Heart left ventricle (tissue), 16 donors: ENCODE measurements at regions of chrX and their contacts with region 1.

Region 1: GRCh38 chrX:94831364-94831763 is 1157.4 kb downstream of the FAM133A start:
- DNase-seq: no peak
- ATAC-seq: no peak
- H3K4me3 ChIP-seq: no peak overlapping the region
- H3K27ac ChIP-seq: no peak overlapping the region
- H3K4me1 ChIP-seq: no peaks in the 10 kb centered on the region
- H3K27me3 ChIP-seq: no peaks in the 10 kb centered on the region
- CTCF ChIP-seq: peak; percentile 12 to 54 (median 36)
- POLR2A ChIP-seq: no peak

Region 2: DNA sequence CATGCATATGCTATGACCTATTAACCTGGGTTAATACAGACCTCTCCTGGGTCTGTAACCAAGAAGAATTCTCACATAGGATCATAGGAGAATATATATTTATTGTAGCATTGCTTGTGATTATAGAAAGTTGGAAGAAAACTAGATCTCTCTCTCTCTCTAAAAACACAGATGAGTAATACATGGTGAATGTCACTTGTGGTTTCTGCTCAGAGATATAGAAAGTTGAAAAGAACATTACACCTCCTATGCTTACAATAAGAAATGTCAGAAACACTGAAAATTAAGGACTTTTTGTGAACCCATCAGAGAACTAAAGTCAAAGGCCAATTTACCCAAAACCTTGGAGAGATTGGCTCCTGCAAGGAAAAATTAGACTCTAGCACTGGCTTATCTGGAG is 232.2 kb after region 1 on chrX:
- intact Hi-C with region 1: loop called in 1 of 10 experiments (anchors 10 kb)
- DNase-seq: no peak
- ATAC-seq: no peak
- H3K4me3 ChIP-seq: no peak overlapping the region
- H3K27ac ChIP-seq: no peak overlapping the region
- H3K4me1 ChIP-seq: no peaks in the 10 kb centered on the region
- H3K27me3 ChIP-seq: peaks cover 0 to 8% (median 0%) of the 10 kb centered on the region in 9 donors
- CTCF ChIP-seq: no peak
- POLR2A ChIP-seq: no peak

Region 3: DNA sequence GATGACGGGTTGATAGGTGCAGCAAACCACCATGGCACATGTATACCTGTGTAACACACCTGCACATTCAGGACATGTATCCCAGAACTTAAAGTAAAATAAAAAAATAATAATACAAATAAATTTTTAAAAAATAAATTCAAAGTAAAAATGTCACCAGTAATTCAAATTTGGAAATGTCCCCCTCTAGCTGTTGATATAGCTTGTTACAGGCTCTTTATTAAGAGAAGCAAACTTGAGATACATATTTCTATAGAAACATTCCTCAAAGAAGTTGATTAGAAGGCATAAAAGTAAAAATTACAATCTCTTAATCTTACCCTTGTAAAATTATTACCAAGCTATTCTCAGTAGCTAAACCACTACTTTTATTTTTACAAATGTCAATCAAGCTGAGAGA is 239.7 kb after region 1 on chrX:
- intact Hi-C with region 1: loop called in 9 of 10 experiments (anchors 5 to 10 kb)
- DNase-seq: no peak
- ATAC-seq: no peak
- H3K4me3 ChIP-seq: no peak overlapping the region
- H3K27ac ChIP-seq: no peak overlapping the region
- H3K4me1 ChIP-seq: no peaks in the 10 kb centered on the region
- H3K27me3 ChIP-seq: peaks cover 0 to 6% (median 0%) of the 10 kb centered on the region in 9 donors
- CTCF ChIP-seq: peak in 3 of 12 donors; percentile 14 to 29 (median 14)
- POLR2A ChIP-seq: no peak

Region 4: DNA sequence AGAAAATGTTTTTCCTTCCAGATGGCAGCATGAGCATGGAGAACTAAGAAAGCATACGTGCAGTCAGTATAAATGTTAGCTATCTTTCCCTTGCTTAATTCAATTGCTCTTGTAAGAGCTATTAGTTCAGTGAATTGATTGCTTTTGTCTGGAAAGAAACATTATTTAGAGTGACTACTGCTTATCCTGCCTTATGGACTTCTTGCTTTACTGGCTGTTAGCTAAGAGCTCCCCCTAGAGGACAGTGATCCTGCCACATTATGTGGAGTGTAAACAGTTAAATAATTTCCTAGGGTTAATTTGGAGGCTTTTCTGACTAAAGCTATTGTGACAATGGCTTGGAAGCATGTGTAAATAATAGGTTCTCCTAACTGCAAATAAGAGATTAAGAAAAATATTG is 245.1 kb after region 1 on chrX:
- intact Hi-C with region 1: loop called in 8 of 10 experiments (anchors 5 to 10 kb)
- DNase-seq: no peak
- ATAC-seq: no peak
- H3K4me3 ChIP-seq: no peak overlapping the region
- H3K27ac ChIP-seq: no peak overlapping the region
- H3K4me1 ChIP-seq: no peaks in the 10 kb centered on the region
- H3K27me3 ChIP-seq: peaks cover 0 to 4% (median 0%) of the 10 kb centered on the region in 9 donors
- CTCF ChIP-seq: peak in 10 of 12 donors; percentile 18 to 50 (median 26)
- POLR2A ChIP-seq: no peak